Gastrocnemius medialis (tissue), 4 donors: ENCODE measurements at regions of chr16 and their contacts with region 1.

Region 1: DNA sequence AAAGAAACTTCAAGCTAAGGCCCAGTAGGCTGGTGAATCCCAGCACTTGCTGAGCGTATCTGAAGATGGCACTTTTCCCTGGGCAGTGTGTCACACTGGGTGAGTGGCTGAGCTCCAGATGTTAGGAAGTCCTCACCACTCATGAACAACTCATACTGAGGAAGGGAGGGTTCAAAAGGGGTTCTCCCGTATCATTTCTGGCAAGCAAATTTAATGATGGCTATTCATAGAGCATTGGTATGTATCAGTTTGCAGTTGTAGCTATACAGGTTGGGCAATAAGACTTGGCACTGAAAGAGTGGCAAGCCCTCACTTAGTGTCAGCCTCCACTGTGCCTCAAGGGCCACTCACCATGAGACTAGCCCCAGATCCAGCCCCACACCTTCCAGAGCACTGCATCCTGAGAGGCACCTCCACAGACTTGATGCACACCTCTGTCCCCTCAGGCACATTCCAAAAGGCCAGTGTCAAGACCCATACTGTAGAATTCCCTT is 10.7 kb downstream of the GFOD2 start:
- DNase-seq: peak; percentile 50 to 63
- ATAC-seq: peak; percentile 82 to 95
- H3K4me3 ChIP-seq: no peak overlapping the region
- H3K27ac ChIP-seq: peak overlapping the region; percentile 71 to 81 (median 73)
- H3K4me1 ChIP-seq: peaks cover 36 to 41% of the 10 kb centered on the region in 2 donors
- H3K27me3 ChIP-seq: no peaks in the 10 kb centered on the region
- CTCF ChIP-seq: no peak
- POLR2A ChIP-seq: peak; percentile 8 to 52

Region 2: GRCh38 chr16:67741118-67741517 is 32.7 kb after region 1 on chr16:
- in situ Hi-C with region 1: no loop called
- intact Hi-C with region 1: loop called (anchors 2 kb)
- DNase-seq: peak; percentile 48 to 76
- ATAC-seq: peak; percentile 78 to 88
- H3K4me3 ChIP-seq: no peak overlapping the region
- H3K27ac ChIP-seq: peak overlapping the region; percentile 66 to 87 (median 72)
- H3K4me1 ChIP-seq: peaks cover 11 to 35% of the 10 kb centered on the region in 2 donors
- H3K27me3 ChIP-seq: no peaks in the 10 kb centered on the region
- CTCF ChIP-seq: no peak
- POLR2A ChIP-seq: no peak

Region 3: DNA sequence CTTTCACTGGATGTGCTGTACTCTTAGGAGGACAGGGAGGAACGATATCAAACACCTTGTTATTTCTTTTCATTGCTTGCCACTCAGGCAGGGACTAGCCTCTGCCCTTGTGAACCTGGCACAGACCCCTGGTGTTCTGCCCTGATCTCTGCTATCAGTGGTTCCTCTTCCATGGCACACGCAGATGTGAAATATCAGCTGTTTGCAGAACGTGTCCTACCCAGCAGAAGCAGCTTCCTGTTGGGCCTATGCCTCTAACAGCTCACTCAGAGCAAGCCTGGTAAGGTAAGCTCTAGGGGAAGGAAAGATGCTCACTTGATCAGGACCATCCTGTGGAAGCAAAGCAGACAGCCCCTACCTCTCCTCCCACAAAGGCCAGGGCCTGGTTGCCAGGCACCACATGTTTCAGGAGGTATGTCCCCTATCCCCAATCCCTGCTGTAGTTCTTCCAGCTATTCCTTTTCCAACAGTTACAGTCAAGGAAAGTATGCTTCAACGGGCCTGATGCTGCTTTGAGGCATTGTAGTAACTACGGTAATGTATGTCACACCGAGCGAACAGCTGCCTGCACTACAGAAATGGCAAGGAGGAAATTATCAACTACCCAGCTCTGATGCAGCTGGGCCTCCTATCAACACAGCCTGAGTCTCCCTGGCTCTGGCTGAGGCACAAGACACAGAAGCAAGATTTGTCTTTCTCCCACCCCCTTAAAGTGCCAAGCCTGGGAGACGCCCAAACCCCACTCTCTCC is 52.0 kb after region 1 on chr16:
- in situ Hi-C with region 1: no loop called
- intact Hi-C with region 1: no loop called
- DNase-seq: peak; percentile 29 to 38
- ATAC-seq: peak; percentile 57 to 78
- H3K4me3 ChIP-seq: no peak overlapping the region
- H3K27ac ChIP-seq: peak overlapping the region; percentile 35 to 75 (median 57)
- H3K4me1 ChIP-seq: peaks cover 17 to 19% of the 10 kb centered on the region in 2 donors
- H3K27me3 ChIP-seq: no peaks in the 10 kb centered on the region
- CTCF ChIP-seq: no peak
- POLR2A ChIP-seq: no peak